ENCODE measurements at regions of chr9 and their contacts with region 1.

Region 1: GRCh38 chr9:136493567-136493971 is 10.7 kb upstream of the SEC16A start:
- DNase-seq: peak in 1 of 5 donors; percentile 52
- ATAC-seq: peak in 2 of 4 donors; percentile 4 to 10
- H3K4me3 ChIP-seq: no peak overlapping the region
- H3K27ac ChIP-seq: peak overlapping the region in 2 of 12 donors; percentile 18 to 33
- H3K4me1 ChIP-seq: peaks cover 0 to 29% (median 3%) of the 10 kb centered on the region in 12 donors
- H3K27me3 ChIP-seq: no peaks in the 10 kb centered on the region
- CTCF ChIP-seq: no peak
- POLR2A ChIP-seq: no peak

Region 2: GRCh38 chr9:136533775-136534157 is 40.2 kb after region 1 on chr9:
- intact Hi-C with region 1: loop called in 1 of 10 experiments (anchors 5 kb)
- DNase-seq: peak in 2 of 5 donors; percentile 76
- ATAC-seq: peak in 3 of 4 donors; percentile 22 to 37 (median 24)
- H3K4me3 ChIP-seq: peak overlapping the region in 2 of 12 donors; percentile 21 to 23
- H3K27ac ChIP-seq: peak overlapping the region in 11 of 12 donors; percentile 14 to 84 (median 66)
- H3K4me1 ChIP-seq: peaks cover 43 to 93% (median 86%) of the 10 kb centered on the region in 12 donors
- H3K27me3 ChIP-seq: no peaks in the 10 kb centered on the region
- CTCF ChIP-seq: no peak
- POLR2A ChIP-seq: no peak

Region 3: GRCh38 chr9:136554870-136555269 is 61.3 kb after region 1 on chr9:
- intact Hi-C with region 1: no loop called
- DNase-seq: no peak
- ATAC-seq: no peak
- H3K4me3 ChIP-seq: no peak overlapping the region
- H3K27ac ChIP-seq: peak overlapping the region in 1 of 12 donors; percentile 99
- H3K4me1 ChIP-seq: peaks cover 0 to 57% (median 16%) of the 10 kb centered on the region in 12 donors
- H3K27me3 ChIP-seq: no peaks in the 10 kb centered on the region
- CTCF ChIP-seq: no peak
- POLR2A ChIP-seq: no peak

Measured in heart left ventricle (tissue), 16 donors.